CD4-positive, alpha-beta memory T cell (primary cell): ENCODE measurements at regions of chr10 and their contacts with region 1.

Region 1: GRCh38 chr10:122435212-122435827 is 19.1 kb upstream of the ARMS2 start:
- DNase-seq: peak in 4 of 5 donors; percentile 54 to 62 (median 60)
- H3K4me3 ChIP-seq: no peak overlapping the region
- H3K4me3 Mint-ChIP-seq: no peak overlapping the region
- H3K27ac ChIP-seq: no peak overlapping the region
- H3K27ac Mint-ChIP-seq: no peak overlapping the region
- H3K4me1 ChIP-seq: no peaks in the 10 kb centered on the region
- H3K4me1 Mint-ChIP-seq: peaks cover 0 to 6% (median under 1%) of the 10 kb centered on the region in 4 donors
- H3K27me3 ChIP-seq: no peaks in the 10 kb centered on the region
- H3K27me3 Mint-ChIP-seq: no peaks in the 10 kb centered on the region

Region 2: GRCh38 chr10:122298598-122299301 is 136.6 kb before region 1 on chr10:
- CTCF ChIA-PET with region 1: interaction called, 88 read pairs
- POLR2A ChIA-PET with region 1: interaction called, 4 read pairs
- intact Hi-C with region 1: loop called (anchors 1 kb)
- DNase-seq: peak; percentile 55 to 63 (median 56)
- H3K4me3 ChIP-seq: peak overlapping the region in 1 of 2 donors; percentile 6
- H3K4me3 Mint-ChIP-seq: peak overlapping the region in 6 of 8 donors; percentile 53 to 74 (median 60)
- H3K27ac ChIP-seq: no peak overlapping the region
- H3K27ac Mint-ChIP-seq: peak overlapping the region in 4 of 7 donors; percentile 1 to 54 (median 47)
- H3K4me1 ChIP-seq: peaks cover 17% of the 10 kb centered on the region
- H3K4me1 Mint-ChIP-seq: peaks cover 12 to 27% (median 16%) of the 10 kb centered on the region in 4 donors
- H3K27me3 ChIP-seq: no peaks in the 10 kb centered on the region
- H3K27me3 Mint-ChIP-seq: peaks cover 0 to 5% of the 10 kb centered on the region in 2 donors

Region 3: GRCh38 chr10:122331615-122332446 is 103.5 kb before region 1 on chr10:
- CTCF ChIA-PET with region 1: interaction called, 17 read pairs
- POLR2A ChIA-PET with region 1: no interaction called
- intact Hi-C with region 1: no loop called
- DNase-seq: no peak
- H3K4me3 ChIP-seq: no peak overlapping the region
- H3K4me3 Mint-ChIP-seq: no peak overlapping the region
- H3K27ac ChIP-seq: no peak overlapping the region
- H3K27ac Mint-ChIP-seq: peak overlapping the region in 1 of 7 donors; percentile 4
- H3K4me1 ChIP-seq: no peaks in the 10 kb centered on the region
- H3K4me1 Mint-ChIP-seq: no peaks in the 10 kb centered on the region
- H3K27me3 ChIP-seq: no peaks in the 10 kb centered on the region
- H3K27me3 Mint-ChIP-seq: peaks cover 10 to 13% of the 10 kb centered on the region in 2 donors

Region 4: GRCh38 chr10:122342293-122343134 is 92.8 kb before region 1 on chr10:
- CTCF ChIA-PET with region 1: interaction called, 185 read pairs
- POLR2A ChIA-PET with region 1: interaction called, 5 read pairs
- intact Hi-C with region 1: loop called (anchors 1 kb)
- DNase-seq: peak; percentile 58 to 68 (median 65)
- H3K4me3 ChIP-seq: no peak overlapping the region
- H3K4me3 Mint-ChIP-seq: no peak overlapping the region
- H3K27ac ChIP-seq: no peak overlapping the region
- H3K27ac Mint-ChIP-seq: peak overlapping the region in 2 of 7 donors; percentile 50 to 75
- H3K4me1 ChIP-seq: no peaks in the 10 kb centered on the region
- H3K4me1 Mint-ChIP-seq: peaks cover 3 to 9% (median 6%) of the 10 kb centered on the region in 4 donors
- H3K27me3 ChIP-seq: no peaks in the 10 kb centered on the region
- H3K27me3 Mint-ChIP-seq: peaks cover 0 to 1% of the 10 kb centered on the region in 2 donors

Region 5: GRCh38 chr10:122407375-122408125 is 27.8 kb before region 1 on chr10:
- CTCF ChIA-PET with region 1: interaction called, 12 read pairs
- POLR2A ChIA-PET with region 1: interaction called, 3 read pairs
- intact Hi-C with region 1: no loop called
- DNase-seq: peak; percentile 25 to 79 (median 46)
- H3K4me3 ChIP-seq: no peak overlapping the region
- H3K4me3 Mint-ChIP-seq: peak overlapping the region; percentile 43 to 74 (median 60)
- H3K27ac ChIP-seq: no peak overlapping the region
- H3K27ac Mint-ChIP-seq: peak overlapping the region; percentile 84 to 96 (median 86)
- H3K4me1 ChIP-seq: peaks cover 52% of the 10 kb centered on the region
- H3K4me1 Mint-ChIP-seq: peaks cover 25 to 50% (median 40%) of the 10 kb centered on the region in 4 donors
- H3K27me3 ChIP-seq: no peaks in the 10 kb centered on the region
- H3K27me3 Mint-ChIP-seq: no peaks in the 10 kb centered on the region

Region 6: DNA sequence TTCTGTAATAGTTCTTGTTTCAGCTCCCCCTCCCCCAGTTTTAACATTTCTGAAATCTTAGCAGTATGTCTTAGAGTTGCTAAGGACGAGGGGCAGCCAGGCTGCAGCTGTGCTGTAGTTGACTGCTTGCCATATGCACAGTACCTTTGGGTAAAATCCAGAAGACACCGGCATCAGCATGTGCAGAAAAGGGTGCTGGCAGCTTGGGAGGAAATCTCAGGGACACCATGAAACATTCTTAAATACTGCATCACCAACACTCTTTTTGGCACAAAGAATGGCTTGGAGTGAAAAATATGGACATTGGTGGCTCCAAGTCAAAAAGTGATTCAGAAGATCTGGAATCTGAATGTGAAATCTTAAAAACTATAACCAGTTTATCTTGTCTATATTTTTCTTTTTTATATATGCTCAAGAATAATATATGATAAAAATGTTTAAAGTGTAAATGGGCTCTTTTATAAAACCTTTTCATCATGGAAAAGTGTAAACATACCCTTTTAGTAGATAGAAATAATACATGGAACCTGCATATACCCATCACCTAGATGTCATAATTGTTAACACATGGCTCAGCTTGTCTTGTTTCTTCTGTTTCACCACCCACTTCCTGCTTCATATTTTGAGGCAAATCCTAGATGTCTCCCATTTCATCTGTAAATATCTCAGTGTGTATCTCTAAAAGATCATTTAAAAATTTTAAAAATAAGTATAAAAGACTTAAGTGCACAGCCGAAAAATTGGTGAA is 15.3 kb before region 1 on chr10:
- CTCF ChIA-PET with region 1: interaction called, 19 read pairs
- POLR2A ChIA-PET with region 1: interaction called, 4 read pairs
- intact Hi-C with region 1: loop called (anchors 2 kb)
- DNase-seq: no peak
- H3K4me3 ChIP-seq: no peak overlapping the region
- H3K4me3 Mint-ChIP-seq: peak overlapping the region in 4 of 8 donors; percentile 38 to 71 (median 48)
- H3K27ac ChIP-seq: no peak overlapping the region
- H3K27ac Mint-ChIP-seq: peak overlapping the region in 6 of 7 donors; percentile 48 to 95 (median 88)
- H3K4me1 ChIP-seq: peaks cover 84% of the 10 kb centered on the region
- H3K4me1 Mint-ChIP-seq: peaks cover 58 to 90% (median 72%) of the 10 kb centered on the region in 4 donors
- H3K27me3 ChIP-seq: no peaks in the 10 kb centered on the region
- H3K27me3 Mint-ChIP-seq: no peaks in the 10 kb centered on the region

Region 7: GRCh38 chr10:122525788-122526187 is 90.5 kb after region 1 on chr10:
- CTCF ChIA-PET with region 1: no interaction called
- POLR2A ChIA-PET with region 1: no interaction called
- intact Hi-C with region 1: no loop called
- DNase-seq: peak in 4 of 5 donors; percentile 18 to 23 (median 22)
- H3K4me3 ChIP-seq: no peak overlapping the region
- H3K4me3 Mint-ChIP-seq: no peak overlapping the region
- H3K27ac ChIP-seq: no peak overlapping the region
- H3K27ac Mint-ChIP-seq: peak overlapping the region in 1 of 7 donors; percentile 7
- H3K4me1 ChIP-seq: no peaks in the 10 kb centered on the region
- H3K4me1 Mint-ChIP-seq: peaks cover 0 to 9% (median 3%) of the 10 kb centered on the region in 4 donors
- H3K27me3 ChIP-seq: no peaks in the 10 kb centered on the region
- H3K27me3 Mint-ChIP-seq: peaks cover 0 to 4% of the 10 kb centered on the region in 2 donors

Region 8: DNA sequence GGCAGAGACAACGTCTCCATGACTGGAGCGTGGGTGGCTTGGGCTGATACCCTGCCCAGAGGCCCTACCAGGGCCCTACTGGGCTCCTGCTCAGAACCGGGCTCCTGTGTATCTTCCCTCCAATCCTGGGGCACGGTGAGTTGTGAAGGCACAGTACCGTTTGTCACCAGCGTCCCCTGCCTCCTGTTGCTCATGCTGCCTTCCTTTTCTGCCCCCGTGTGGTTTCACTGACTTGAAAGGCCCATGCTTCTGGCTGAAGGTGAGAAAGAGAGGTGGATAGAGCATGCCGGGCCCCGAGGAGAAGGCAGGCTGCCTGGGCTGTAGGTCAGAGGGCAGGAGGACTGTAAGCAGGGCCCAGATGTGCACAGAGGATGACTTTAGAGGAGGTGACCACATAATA is 116.1 kb after region 1 on chr10:
- CTCF ChIA-PET with region 1: interaction called, 4 read pairs
- POLR2A ChIA-PET with region 1: no interaction called
- intact Hi-C with region 1: loop called (anchors 5 kb)
- DNase-seq: peak; percentile 38 to 49 (median 41)
- H3K4me3 ChIP-seq: no peak overlapping the region
- H3K4me3 Mint-ChIP-seq: peak overlapping the region in 7 of 8 donors; percentile 24 to 78 (median 61)
- H3K27ac ChIP-seq: no peak overlapping the region
- H3K27ac Mint-ChIP-seq: peak overlapping the region; percentile 69 to 90 (median 87)
- H3K4me1 ChIP-seq: peaks cover 24% of the 10 kb centered on the region
- H3K4me1 Mint-ChIP-seq: peaks cover 21 to 42% (median 27%) of the 10 kb centered on the region in 4 donors
- H3K27me3 ChIP-seq: no peaks in the 10 kb centered on the region
- H3K27me3 Mint-ChIP-seq: no peaks in the 10 kb centered on the region

Region 9: GRCh38 chr10:122725768-122726167 is 290.4 kb after region 1 on chr10:
- CTCF ChIA-PET with region 1: no interaction called
- POLR2A ChIA-PET with region 1: no interaction called
- intact Hi-C with region 1: no loop called
- DNase-seq: no peak
- H3K4me3 ChIP-seq: no peak overlapping the region
- H3K4me3 Mint-ChIP-seq: no peak overlapping the region
- H3K27ac ChIP-seq: no peak overlapping the region
- H3K27ac Mint-ChIP-seq: no peak overlapping the region
- H3K4me1 ChIP-seq: no peaks in the 10 kb centered on the region
- H3K4me1 Mint-ChIP-seq: no peaks in the 10 kb centered on the region
- H3K27me3 ChIP-seq: no peaks in the 10 kb centered on the region
- H3K27me3 Mint-ChIP-seq: peaks cover 10 to 20% of the 10 kb centered on the region in 2 donors